ENCODE measurements at regions of chr19 and their contacts with region 1.

Region 1: DNA sequence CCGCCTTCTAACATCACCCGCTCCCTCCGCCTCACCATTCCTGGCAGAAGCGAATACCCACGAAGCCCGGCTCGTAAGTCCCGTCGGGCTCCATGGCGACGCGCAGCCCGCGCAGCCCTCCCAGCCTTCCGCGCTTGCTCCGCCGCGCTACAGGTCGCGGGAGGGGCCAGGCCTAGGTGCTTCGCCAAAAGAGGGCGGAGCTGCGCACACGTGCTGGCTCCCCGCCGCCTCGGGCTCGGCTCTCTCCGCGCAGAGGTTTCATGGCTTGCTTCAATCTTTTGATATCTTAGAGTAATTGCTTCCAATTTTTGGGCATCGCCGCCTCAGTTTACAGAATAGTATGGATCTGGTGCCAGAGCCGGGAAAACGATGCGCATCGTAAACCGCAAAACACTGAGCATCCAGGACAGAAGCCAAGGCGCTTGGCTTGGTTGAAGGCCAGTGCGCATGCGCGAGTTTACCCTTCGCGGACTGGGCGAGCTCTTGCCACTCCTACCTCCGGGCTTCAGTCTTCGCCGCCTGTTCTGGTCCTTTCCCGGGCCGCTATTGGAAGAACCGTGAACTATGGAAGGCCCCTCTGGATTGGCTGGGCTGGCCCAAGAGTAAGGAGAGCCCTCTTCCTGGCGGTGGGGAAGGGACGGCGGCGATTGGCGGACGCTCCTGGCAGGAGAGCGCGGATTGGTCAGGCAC is at the start of gene POLR2I:
- DNase-seq: peak; percentile 99 to 100
- H3K4me3 ChIP-seq: peak within 1 kb of the TSS; percentile 78 to 90
- H3K27ac ChIP-seq: peak within 1 kb of the TSS; percentile 89
- H3K4me1 ChIP-seq: peaks cover 0 to 8% of the 10 kb centered on the region in 2 donors
- H3K27me3 ChIP-seq: no peaks in the 10 kb centered on the region
- CTCF ChIP-seq: peak in 2 of 4 experiments; percentile 16 to 18
- POLR2A ChIP-seq: peak in 1 of 2 donors; percentile 84
- total RNA-seq, gene POLR2I: 8.2 to 69.8 (median 25.2) TPM

Region 2: GRCh38 chr19:36054119-36054732 is 60.7 kb before region 1 on chr19 and contains the start of gene THAP8:
- intact Hi-C with region 1: loop called (anchors 10 kb)
- DNase-seq: peak; percentile 100
- H3K4me3 ChIP-seq: peak within 1 kb of the TSS; percentile 50 to 54
- H3K27ac ChIP-seq: peak within 1 kb of the TSS; percentile 88 to 97
- H3K4me1 ChIP-seq: peaks cover 0 to 7% of the 10 kb centered on the region in 2 donors
- H3K27me3 ChIP-seq: no peaks in the 10 kb centered on the region
- CTCF ChIP-seq: peak; percentile 13 to 68 (median 55)
- POLR2A ChIP-seq: peak; percentile 65 to 80
- total RNA-seq, gene THAP8: 4.6 to 6.5 (median 6.2) TPM in 3 of 4 donors, not detected in the other

Region 3: GRCh38 chr19:36152352-36153091 is 37.6 kb after region 1 on chr19 and contains the start of gene COX7A1:
- intact Hi-C with region 1: no loop called
- DNase-seq: peak; percentile 71 to 74
- H3K4me3 ChIP-seq: peak within 1 kb of the TSS; percentile 44 to 50
- H3K27ac ChIP-seq: peak within 1 kb of the TSS; percentile 94 to 98
- H3K4me1 ChIP-seq: peaks cover 0 to 5% of the 10 kb centered on the region in 2 donors
- H3K27me3 ChIP-seq: no peaks in the 10 kb centered on the region
- CTCF ChIP-seq: no peak
- POLR2A ChIP-seq: peak; percentile 42 to 51
- total RNA-seq, gene COX7A1: 4.7 to 235 (median 65.2) TPM